T-cell (primary cell): ENCODE measurements at regions of chr5 and their contacts with region 1.

Region 1: GRCh38 chr5:74822288-74822687 is 43.9 kb downstream of the FAM169A start:
- DNase-seq: no peak
- ATAC-seq: no peak
- H3K4me3 ChIP-seq: no peak overlapping the region
- H3K4me3 Mint-ChIP-seq: no peak overlapping the region
- H3K27ac ChIP-seq: no peak overlapping the region
- H3K27ac Mint-ChIP-seq: no peak overlapping the region
- H3K4me1 ChIP-seq: no peaks in the 10 kb centered on the region
- H3K4me1 Mint-ChIP-seq: peaks cover 0 to 3% (median 1%) of the 10 kb centered on the region in 3 donors
- H3K27me3 ChIP-seq: no peaks in the 10 kb centered on the region
- H3K27me3 Mint-ChIP-seq: no peaks in the 10 kb centered on the region

Region 2: DNA sequence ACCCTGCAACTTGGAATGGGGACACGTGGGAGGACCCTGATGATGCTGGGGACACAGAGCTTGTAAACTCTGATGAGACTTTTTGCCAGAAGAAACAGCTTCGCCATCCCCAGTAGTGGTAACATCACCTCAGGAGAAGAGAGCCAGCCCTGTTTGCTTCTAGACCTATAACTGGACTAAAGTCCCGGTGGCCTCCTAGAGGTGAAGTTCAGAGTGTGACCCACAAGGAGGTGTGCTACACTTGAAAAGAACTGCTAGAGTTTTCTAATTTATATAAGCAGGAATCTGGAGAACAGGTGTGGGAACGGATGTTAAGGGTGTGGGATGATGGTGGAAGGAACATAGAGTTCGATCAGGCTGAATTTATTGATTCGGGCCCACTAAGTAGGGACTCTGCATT is 35.4 kb before region 1 on chr5:
- CTCF ChIA-PET with region 1: interaction called in 1 of 2 experiments, 10 read pairs
- POLR2A ChIA-PET with region 1: no interaction called
- DNase-seq: no peak
- ATAC-seq: no peak
- H3K4me3 ChIP-seq: no peak overlapping the region
- H3K4me3 Mint-ChIP-seq: no peak overlapping the region
- H3K27ac ChIP-seq: no peak overlapping the region
- H3K27ac Mint-ChIP-seq: no peak overlapping the region
- H3K4me1 ChIP-seq: no peaks in the 10 kb centered on the region
- H3K4me1 Mint-ChIP-seq: no peaks in the 10 kb centered on the region
- H3K27me3 ChIP-seq: no peaks in the 10 kb centered on the region
- H3K27me3 Mint-ChIP-seq: no peaks in the 10 kb centered on the region